GM10248 (cell line): ENCODE measurements at regions of chr4 and their contacts with region 1.

Region 1: DNA sequence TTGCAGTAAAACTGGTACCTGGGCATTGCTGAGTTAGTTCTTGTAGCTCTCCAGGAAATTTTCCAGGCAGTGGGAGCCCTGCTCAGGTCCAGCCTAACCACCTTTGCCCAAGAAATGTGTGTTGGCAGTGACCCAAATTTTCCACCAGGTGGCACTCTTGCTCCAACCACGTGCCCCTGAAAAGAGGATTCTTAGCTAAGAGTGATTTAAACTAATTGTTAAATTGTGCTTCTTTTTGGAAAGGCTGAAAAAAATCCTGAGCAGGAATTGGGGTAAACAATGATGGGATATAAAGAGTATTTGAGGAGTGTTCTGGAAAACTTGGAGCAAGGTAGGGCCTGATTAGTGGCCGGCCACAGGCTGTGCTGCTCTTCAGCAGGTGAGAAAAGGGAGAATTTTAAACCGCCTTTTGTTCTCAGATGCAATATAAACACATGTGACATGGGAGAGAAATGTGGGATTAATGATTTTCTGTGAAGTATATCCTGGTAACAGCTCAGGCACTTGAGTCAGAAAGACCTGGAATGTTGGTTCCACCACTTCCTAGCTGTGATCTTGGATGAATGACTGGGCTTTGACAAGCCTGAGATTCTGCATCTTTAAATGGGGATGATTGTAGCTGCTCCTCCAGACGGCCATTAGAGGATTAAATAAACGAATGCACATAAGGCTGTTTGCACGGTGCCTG is 219.6 kb downstream of the PTTG2 start:
- DNase-seq: peak; percentile 61
- CTCF ChIP-seq: peak; percentile 84

Region 2: DNA sequence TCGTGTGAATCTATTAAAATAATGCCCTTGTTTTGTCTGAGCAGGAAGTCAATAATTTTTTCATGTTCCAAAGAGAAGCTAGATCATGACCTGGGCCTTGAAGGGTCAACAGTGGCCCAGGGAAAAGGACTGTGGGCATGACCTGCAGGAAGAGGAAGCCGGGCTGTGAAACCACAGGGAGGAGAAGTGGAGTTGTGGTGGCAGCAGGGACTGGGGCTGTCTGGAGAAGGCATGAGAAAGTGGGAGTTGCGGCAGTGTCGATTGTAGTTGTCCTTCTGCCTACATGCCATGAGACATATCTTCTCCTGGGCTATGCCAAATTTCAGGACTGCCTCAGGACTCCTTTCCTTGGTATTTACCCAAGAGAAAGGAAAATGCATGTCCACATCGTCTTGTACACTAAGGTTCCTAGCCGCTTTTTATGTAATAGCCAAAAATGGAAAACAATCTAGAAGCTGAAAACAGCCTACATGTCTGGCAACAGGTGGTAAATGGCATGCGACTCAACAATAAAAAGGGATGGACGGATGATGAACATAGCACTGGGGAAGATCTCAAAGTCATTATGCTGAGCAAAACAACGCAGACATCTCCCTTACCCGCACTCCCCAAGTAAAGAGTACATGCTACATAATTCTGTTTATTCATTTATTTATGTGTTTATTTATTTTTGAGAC is 233.2 kb before region 1 on chr4:
- CTCF ChIA-PET with region 1: no interaction called
- POLR2A ChIA-PET with region 1: no interaction called
- DNase-seq: no peak
- CTCF ChIP-seq: no peak

Region 3: DNA sequence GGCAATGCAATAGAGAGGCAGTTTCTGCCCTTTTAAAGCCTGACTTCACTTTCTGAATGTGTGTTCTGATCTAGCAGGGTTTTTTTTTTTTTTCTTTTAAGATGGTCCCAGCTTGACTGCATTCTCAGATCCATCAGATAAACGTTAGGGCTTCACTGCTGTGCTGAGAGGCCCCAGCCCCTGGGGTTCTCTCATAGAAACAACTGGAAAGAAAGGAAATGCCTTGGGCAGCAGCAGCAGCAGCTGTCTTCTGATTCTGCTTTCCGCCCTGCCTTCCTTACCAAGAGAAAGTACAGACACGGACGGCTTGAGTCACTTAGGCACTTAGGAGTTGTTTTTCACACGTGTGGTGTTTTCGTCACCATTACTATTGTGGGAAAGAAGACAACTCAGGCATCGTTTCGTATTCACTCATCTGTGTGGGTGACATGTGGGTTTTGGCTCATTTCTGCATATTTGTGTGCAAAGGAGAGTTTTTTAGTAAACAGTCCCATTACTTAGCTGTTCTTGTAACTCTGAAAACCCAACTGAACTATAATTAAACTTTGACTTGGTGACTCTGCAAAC is 47.6 kb before region 1 on chr4:
- CTCF ChIA-PET with region 1: interaction called, 25 read pairs
- POLR2A ChIA-PET with region 1: interaction called, 4 read pairs
- DNase-seq: peak; percentile 72
- CTCF ChIP-seq: no peak

Region 4: GRCh38 chr4:38169524-38169923 is 10.3 kb before region 1 on chr4:
- CTCF ChIA-PET with region 1: interaction called, 24 read pairs
- POLR2A ChIA-PET with region 1: no interaction called
- DNase-seq: no peak
- CTCF ChIP-seq: no peak

Region 5: DNA sequence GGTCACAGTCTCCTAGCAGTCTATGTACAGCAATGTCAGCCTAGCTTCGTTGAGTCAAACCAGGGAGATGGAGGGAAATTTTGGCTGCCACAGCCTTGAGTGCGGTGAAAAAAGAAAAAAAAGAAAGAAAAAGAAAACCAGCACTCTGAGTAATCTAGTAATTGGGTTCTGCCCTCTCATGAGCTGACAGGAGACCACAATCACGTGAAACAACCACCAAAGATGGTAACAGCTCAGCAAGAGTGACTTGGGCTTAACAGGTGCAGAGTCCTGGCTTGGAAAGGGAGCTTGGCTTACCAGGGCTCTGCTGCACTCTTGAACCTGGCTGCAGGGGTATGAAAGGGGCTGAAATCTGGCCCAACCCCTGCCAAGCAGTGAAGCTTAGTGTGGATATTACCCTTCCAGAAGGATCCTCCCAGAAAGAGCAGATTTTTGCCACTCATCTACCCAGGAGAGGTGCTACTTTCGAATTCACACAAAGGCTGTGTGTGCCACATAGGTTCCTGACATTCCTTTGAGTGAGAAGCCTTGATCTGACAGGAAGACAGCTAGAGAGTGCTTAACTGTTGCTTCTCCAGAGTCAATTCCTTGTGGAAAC is 130.7 kb after region 1 on chr4:
- CTCF ChIA-PET with region 1: interaction called, 16 read pairs
- POLR2A ChIA-PET with region 1: no interaction called
- DNase-seq: peak; percentile 75
- CTCF ChIP-seq: no peak

Region 6: DNA sequence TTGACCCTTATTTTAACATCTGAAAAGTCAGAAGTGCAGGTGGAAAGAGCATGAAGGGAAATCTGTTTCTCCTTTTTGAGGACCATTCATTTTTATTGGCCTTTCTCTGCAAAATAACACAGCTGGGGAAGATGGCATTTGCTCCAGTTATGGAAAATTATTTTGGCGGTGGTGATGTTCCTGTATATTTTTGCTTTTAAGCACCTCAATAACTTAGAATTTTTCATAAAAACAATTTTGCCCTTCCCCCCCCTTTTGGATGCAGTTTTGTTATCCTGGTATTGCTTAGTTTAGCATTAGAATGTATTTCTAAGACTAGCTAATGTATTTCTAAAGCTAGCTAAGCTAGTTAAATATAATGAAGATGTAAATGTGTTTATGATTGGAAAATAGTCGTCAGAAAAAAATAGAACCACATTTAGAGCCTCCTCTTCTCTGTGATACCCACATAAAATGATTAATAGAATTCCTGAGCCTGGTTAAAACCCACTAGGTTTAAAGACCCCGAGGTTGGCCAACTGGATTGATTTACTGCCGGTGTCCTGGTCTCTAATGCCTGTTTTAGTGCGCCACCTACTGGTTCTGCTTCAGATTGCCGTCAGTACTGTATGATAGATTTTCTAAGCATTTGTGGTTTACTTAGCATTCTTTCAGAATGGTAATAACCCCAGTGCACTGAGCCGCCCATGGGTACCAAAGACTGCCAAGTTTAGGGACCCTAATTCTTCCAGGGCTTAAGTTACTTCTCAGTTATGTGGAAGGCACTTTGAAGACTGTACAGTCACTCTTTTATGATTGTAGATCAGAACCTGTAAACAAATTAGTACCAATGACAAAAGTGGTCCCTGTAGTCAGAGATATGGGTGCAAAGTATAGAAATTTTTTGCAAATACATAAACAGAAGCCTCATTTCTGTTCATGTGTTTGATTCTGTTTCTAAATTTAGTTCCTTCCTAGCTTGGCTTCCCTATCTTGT is 495.6 kb after region 1 on chr4:
- CTCF ChIA-PET with region 1: interaction called, 115 read pairs
- POLR2A ChIA-PET with region 1: no interaction called
- DNase-seq: peak; percentile 67
- CTCF ChIP-seq: peak; percentile 84

Region 7: GRCh38 chr4:38759113-38759789 is 579.4 kb after region 1 on chr4:
- CTCF ChIA-PET with region 1: interaction called, 43 read pairs
- POLR2A ChIA-PET with region 1: no interaction called
- DNase-seq: peak; percentile 45
- CTCF ChIP-seq: peak; percentile 62